Naive thymus-derived CD4-positive, alpha-beta T cell (primary cell): ENCODE measurements at regions of chr15 and their contacts with region 1.

Region 1: GRCh38 chr15:90306560-90306959 is 41.1 kb downstream of the NGRN start:
- DNase-seq: peak in 5 of 9 donors; percentile 16 to 49 (median 23)
- ATAC-seq: peak; percentile 70
- H3K4me3 ChIP-seq: peak overlapping the region; percentile 7
- H3K4me3 Mint-ChIP-seq: peak overlapping the region in 9 of 10 donors; percentile 36 to 74 (median 58)
- H3K27ac ChIP-seq: peak overlapping the region; percentile 20
- H3K27ac Mint-ChIP-seq: peak overlapping the region; percentile 65 to 88 (median 81)
- H3K4me1 ChIP-seq: peaks cover 15 to 16% of the 10 kb centered on the region in 2 donors
- H3K4me1 Mint-ChIP-seq: peaks cover 8 to 37% (median 28%) of the 10 kb centered on the region in 7 donors
- H3K27me3 ChIP-seq: no peaks in the 10 kb centered on the region
- H3K27me3 Mint-ChIP-seq: peaks cover 0 to 3% (median 0%) of the 10 kb centered on the region in 5 donors

Region 2: DNA sequence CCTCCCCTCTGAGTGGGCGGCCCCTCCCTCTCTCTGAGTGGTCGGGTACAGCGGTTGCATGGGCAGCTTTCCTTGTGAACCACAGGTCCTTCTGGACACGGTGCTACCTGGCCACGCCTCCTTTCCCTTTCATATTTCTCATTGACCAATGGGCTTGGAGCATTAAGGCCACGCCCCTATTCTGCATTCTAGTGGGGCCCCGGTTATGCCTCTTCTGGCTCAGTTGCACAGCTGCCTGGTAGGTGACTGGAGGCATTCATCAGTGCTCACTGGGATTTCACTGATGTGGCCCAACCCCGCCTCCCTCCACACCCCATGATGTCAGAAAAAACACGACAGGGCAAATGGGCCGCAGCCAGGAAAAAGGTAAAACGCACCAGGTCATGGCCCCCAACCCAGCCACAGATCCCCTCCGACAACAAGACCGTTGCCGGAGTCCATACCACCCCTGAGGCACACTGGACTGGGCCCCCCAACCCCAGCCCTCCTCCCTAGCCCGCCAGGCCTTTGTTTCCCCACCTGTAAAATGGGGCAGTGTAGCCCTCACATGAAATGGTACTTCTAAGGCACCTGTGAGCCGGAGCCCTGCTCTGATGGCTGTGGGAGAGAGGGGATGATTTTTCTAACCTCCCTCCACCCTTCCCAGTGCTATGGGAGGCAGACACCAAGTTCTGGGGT is 14.7 kb before region 1 on chr15:
- CTCF ChIA-PET with region 1: interaction called, 15 read pairs
- POLR2A ChIA-PET with region 1: no interaction called
- intact Hi-C with region 1: no loop called
- DNase-seq: no peak
- ATAC-seq: no peak
- H3K4me3 ChIP-seq: no peak overlapping the region
- H3K4me3 Mint-ChIP-seq: no peak overlapping the region
- H3K27ac ChIP-seq: no peak overlapping the region
- H3K27ac Mint-ChIP-seq: no peak overlapping the region
- H3K4me1 ChIP-seq: no peaks in the 10 kb centered on the region
- H3K4me1 Mint-ChIP-seq: peaks cover 0 to 19% (median under 1%) of the 10 kb centered on the region in 7 donors
- H3K27me3 ChIP-seq: no peaks in the 10 kb centered on the region
- H3K27me3 Mint-ChIP-seq: peaks cover 0 to 18% (median 4%) of the 10 kb centered on the region in 5 donors

Region 3: GRCh38 chr15:90352109-90352893 is 45.7 kb after region 1 on chr15 and contains the start of gene ZNF774:
- CTCF ChIA-PET with region 1: no interaction called
- POLR2A ChIA-PET with region 1: no interaction called
- intact Hi-C with region 1: no loop called
- DNase-seq: peak; percentile 74 to 95 (median 93)
- ATAC-seq: peak; percentile 99
- H3K4me3 ChIP-seq: peak within 1 kb of the TSS; percentile 91
- H3K4me3 Mint-ChIP-seq: peak within 1 kb of the TSS; percentile 86 to 92 (median 89)
- H3K27ac ChIP-seq: peak within 1 kb of the TSS; percentile 73
- H3K27ac Mint-ChIP-seq: peak within 1 kb of the TSS in 8 of 9 donors; percentile 8 to 86 (median 66)
- H3K4me1 ChIP-seq: peaks cover 5 to 11% of the 10 kb centered on the region in 2 donors
- H3K4me1 Mint-ChIP-seq: peaks cover 7 to 29% (median 9%) of the 10 kb centered on the region in 7 donors
- H3K27me3 ChIP-seq: no peaks in the 10 kb centered on the region
- H3K27me3 Mint-ChIP-seq: peaks cover 0 to 17% (median 0%) of the 10 kb centered on the region in 5 donors
- total RNA-seq, gene ZNF774: 0.22 to 2.0 (median 1.5) TPM